Dendritic cell treated with granulocyte-macrophage colony-stimulating factor and Interleukin-4, amounts not matched to agents 40 ng/mL and 50 ng/mL, for 4 days (primary cell): ENCODE measurements at regions of chr12 and their contacts with region 1.

Region 1: DNA sequence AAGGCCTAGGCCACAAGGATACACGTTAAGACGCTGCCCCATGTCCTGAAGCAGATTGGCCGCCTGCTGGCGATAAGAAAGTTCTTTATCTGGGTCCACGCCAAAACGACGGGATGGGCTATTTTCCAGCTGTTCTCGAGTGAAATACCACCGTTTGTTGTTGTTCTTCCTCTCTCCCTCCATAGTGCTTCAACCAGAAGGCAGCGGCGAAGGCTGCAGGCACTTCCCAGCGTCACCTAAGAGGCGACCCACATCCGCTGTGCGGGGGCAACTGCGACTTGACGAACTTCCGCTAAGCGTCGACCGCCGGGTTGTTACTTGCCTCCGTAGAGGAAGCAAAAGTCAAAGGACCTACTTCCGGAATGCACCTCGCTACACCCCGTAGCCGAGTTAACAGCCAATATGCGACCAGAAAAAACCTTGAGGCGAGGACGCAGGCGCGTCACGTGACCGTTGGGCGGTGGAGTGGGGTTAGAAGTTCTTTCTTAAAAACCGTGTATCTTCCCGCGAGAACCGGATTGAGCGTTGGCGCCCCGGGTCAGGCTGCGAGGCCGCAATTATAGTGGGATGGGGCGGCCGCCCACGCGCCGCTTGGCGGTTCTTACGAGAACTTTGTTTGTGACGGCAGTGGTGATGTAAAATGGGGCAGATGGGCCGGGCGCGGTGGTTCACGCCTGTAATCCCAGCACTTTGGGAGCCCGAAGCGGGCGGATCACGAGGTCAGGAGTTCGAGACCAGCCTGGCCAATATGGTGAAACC is at the start of gene CCNT1:
- H3K4me3 Mint-ChIP-seq: peak within 1 kb of the TSS; percentile 93
- H3K27ac Mint-ChIP-seq: peak within 1 kb of the TSS; percentile 98
- H3K4me1 Mint-ChIP-seq: peaks cover 32% of the 10 kb centered on the region
- H3K27me3 Mint-ChIP-seq: peaks cover 3% of the 10 kb centered on the region

Region 2: GRCh38 chr12:48105862-48106680 is 610.6 kb before region 1 on chr12 and contains the start of gene SENP1:
- intact Hi-C with region 1: loop called (anchors 10 kb)
- H3K4me3 Mint-ChIP-seq: peak within 1 kb of the TSS; percentile 89
- H3K27ac Mint-ChIP-seq: peak within 1 kb of the TSS; percentile 98
- H3K4me1 Mint-ChIP-seq: peaks cover 25% of the 10 kb centered on the region
- H3K27me3 Mint-ChIP-seq: peaks cover 14% of the 10 kb centered on the region

Region 3: GRCh38 chr12:48681738-48682532 is 34.7 kb before region 1 on chr12 and contains the start of gene KANSL2:
- intact Hi-C with region 1: loop called (anchors 1 kb)
- H3K4me3 Mint-ChIP-seq: peak within 1 kb of the TSS; percentile 92
- H3K27ac Mint-ChIP-seq: peak within 1 kb of the TSS; percentile 98
- H3K4me1 Mint-ChIP-seq: peaks cover 33% of the 10 kb centered on the region
- H3K27me3 Mint-ChIP-seq: no peaks in the 10 kb centered on the region